ENCODE measurements at regions of chr2 and their contacts with region 1.

Region 1: DNA sequence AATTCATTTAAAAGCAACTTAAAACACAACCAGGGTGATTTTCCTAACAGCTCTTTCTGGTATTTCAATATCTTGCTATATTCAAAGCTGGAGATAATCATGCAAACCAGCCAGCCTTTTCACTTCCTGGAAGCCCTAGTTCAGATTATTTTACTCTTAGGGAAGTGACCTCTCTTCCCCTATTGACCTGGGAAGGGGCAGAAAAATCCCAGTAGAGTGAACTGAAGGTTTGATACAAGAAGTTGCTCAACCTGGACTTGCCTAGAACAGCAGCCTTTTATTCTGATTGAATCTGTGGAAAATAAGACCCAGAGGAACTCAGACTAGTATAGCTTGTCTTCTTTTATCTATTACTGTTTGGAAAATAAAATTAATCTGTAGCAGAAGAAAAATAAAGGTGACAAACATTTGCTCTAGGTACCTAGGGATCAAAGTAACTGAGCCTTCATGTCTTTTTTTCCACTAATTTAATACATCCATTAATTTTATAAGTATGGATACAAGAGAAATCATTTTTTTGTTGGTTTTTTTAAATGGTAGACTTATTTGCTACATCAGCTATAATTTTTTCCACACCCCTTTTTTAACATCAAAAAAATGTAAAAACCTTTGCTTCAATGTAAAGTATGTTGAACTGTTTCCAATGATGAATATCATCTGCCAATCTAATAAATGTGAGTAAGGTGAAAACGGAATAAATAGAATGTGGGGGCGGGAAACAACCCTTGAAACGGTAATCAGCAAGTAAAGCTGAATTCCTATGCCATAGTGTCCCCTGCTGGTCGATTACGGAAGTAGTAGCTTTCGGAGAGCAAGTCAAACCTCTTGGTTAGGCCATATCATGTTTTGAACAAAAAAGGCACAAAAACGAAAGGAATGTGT is 629.9 kb downstream of the NRXN1 start:
- DNase-seq: no peak
- H3K4me3 ChIP-seq: no peak overlapping the region
- H3K27ac ChIP-seq: no peak overlapping the region
- H3K4me1 ChIP-seq: no peaks in the 10 kb centered on the region
- H3K27me3 ChIP-seq: no peaks in the 10 kb centered on the region
- CTCF ChIP-seq: peak; percentile 49 to 84 (median 76)

Region 2: GRCh38 chr2:48600204-48600813 is 1801.7 kb before region 1 on chr2:
- intact Hi-C with region 1: loop called (anchors 10 kb)
- DNase-seq: no peak
- H3K4me3 ChIP-seq: no peak overlapping the region
- H3K27ac ChIP-seq: no peak overlapping the region
- H3K4me1 ChIP-seq: no peaks in the 10 kb centered on the region
- H3K27me3 ChIP-seq: no peaks in the 10 kb centered on the region
- CTCF ChIP-seq: peak; percentile 21 to 65 (median 55)

Region 3: DNA sequence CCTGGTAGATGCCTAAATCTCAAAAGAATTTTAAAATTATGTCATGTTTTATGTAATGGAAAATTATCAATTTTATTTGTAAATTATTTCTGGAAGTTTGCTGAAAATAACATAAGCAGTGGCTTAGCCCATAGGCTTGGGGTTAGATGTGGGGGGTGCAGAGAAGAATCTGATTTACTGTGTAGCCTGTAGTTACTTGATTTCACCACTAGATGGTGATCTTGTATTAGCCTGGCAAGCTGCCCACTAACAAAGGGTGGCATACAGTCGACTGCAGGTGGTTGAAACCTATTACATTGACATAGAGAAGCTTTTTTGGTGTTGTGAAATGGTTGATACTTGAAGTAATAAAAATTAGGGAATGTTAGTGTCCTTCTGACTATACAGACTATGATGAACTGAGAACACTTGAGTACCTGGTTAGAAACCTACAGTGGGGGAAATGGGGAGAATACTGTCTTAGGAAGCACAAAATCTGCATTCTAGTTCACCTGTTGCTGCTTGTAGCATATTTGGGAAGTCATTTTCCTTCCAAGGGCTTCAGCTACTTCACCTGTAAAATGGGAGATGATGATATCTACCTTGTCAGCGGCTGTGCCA is 1455.5 kb before region 1 on chr2:
- intact Hi-C with region 1: loop called (anchors 5 kb)
- DNase-seq: no peak
- H3K4me3 ChIP-seq: no peak overlapping the region
- H3K27ac ChIP-seq: no peak overlapping the region
- H3K4me1 ChIP-seq: peaks cover 0 to 10% of the 10 kb centered on the region in 2 donors
- H3K27me3 ChIP-seq: no peaks in the 10 kb centered on the region
- CTCF ChIP-seq: peak; percentile 69 to 83 (median 81)

Region 4: GRCh38 chr2:49616800-49617199 is 785.2 kb before region 1 on chr2:
- intact Hi-C with region 1: loop called (anchors 5 kb)
- DNase-seq: no peak
- H3K4me3 ChIP-seq: no peak overlapping the region
- H3K27ac ChIP-seq: no peak overlapping the region
- H3K4me1 ChIP-seq: no peaks in the 10 kb centered on the region
- H3K27me3 ChIP-seq: no peaks in the 10 kb centered on the region
- CTCF ChIP-seq: peak in 1 of 3 experiments; percentile 23

Region 5: DNA sequence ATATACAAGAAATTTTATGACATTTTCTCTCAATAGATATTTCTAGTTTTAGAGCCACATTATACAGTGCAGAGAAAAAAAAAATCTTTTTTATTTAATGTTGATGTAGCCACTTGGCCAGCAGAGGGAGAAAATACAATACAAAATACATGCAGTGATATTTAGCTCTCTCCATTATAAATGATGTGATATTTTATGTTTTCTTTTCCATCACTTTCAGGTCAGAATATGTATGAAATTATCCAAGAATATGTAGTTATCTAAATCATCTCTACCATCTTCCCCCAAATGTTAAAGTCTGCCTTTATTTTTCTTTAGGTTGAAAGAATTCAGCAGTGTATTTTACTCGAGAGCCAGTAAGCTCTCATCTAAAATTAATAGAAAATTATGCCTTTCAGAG is 714.1 kb before region 1 on chr2:
- intact Hi-C with region 1: loop called (anchors 5 kb)
- DNase-seq: no peak
- H3K4me3 ChIP-seq: no peak overlapping the region
- H3K27ac ChIP-seq: no peak overlapping the region
- H3K4me1 ChIP-seq: no peaks in the 10 kb centered on the region
- H3K27me3 ChIP-seq: no peaks in the 10 kb centered on the region
- CTCF ChIP-seq: peak in 2 of 3 experiments; percentile 13 to 37

Region 6: DNA sequence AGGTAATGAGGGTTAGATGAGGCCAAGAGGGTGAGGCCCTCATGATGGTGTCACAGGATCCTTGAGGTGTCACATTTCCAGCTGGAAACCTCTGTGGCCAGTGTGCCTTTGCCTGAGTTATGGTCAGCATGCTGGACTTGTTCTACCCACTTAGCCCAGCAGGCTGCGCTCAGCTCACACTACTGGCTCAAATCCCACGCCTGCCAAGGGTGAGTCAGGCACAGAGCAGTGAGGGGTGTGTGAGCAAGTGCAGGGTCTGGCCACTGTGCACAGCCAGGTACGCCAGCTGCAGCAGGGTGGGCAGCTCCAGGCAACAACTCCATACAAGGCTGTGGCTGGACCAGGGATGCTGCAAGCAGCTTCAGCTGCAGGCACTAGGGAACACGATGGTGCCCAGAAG is 631.1 kb before region 1 on chr2:
- intact Hi-C with region 1: loop called (anchors 5 kb)
- DNase-seq: no peak
- H3K4me3 ChIP-seq: no peak overlapping the region
- H3K27ac ChIP-seq: no peak overlapping the region
- H3K4me1 ChIP-seq: no peaks in the 10 kb centered on the region
- H3K27me3 ChIP-seq: no peaks in the 10 kb centered on the region
- CTCF ChIP-seq: peak in 2 of 3 experiments; percentile 7 to 48